WTC11 (cell line): ENCODE measurements at regions of chr2 and their contacts with region 1.

Region 1: DNA sequence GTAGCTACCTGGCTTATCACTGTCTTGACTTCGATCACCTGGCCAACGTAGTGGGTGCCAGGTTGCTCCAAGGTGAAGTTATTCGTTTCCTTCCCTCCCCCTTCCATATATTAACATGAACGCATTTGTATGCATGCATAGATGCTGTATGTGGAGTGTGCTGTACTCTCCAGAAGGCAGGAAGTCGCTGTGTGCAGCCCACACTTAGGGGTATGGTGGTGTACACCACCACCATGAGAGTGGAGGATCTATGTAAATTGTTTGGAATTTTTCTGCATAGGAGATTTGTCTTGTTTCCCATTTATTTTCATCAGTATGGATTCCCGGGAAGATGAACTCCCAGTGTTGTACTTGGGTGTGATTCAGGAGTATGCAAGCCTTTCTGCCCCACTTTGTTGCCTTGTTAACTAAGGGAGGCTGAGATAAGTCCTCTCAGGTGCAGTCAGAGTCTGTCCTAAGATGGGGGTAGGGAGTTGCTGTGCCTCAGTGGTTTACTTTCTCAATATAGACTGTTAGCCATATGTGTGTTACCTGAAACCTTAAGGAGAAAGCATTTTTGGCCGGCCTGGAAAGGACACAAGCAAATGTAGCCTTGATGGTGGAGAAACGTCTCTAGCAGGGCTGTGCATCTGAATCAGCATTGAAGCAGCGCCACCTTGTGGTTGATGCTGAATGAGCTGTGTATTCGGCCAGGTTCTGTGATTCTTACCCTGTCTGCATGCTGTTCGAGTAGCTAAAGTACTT is 149.8 kb downstream of the TANC1 start:
- DNase-seq: peak; percentile 91
- ATAC-seq: peak; percentile 97
- H3K4me3 Mint-ChIP-seq: no peak overlapping the region
- H3K27ac Mint-ChIP-seq: no peak overlapping the region
- H3K4me1 Mint-ChIP-seq: peaks cover 5% of the 10 kb centered on the region; the same call in 1 of the 2 replicates
- H3K27me3 Mint-ChIP-seq: no peaks in the 10 kb centered on the region
- CTCF ChIP-seq: peak; percentile 85

Region 2: DNA sequence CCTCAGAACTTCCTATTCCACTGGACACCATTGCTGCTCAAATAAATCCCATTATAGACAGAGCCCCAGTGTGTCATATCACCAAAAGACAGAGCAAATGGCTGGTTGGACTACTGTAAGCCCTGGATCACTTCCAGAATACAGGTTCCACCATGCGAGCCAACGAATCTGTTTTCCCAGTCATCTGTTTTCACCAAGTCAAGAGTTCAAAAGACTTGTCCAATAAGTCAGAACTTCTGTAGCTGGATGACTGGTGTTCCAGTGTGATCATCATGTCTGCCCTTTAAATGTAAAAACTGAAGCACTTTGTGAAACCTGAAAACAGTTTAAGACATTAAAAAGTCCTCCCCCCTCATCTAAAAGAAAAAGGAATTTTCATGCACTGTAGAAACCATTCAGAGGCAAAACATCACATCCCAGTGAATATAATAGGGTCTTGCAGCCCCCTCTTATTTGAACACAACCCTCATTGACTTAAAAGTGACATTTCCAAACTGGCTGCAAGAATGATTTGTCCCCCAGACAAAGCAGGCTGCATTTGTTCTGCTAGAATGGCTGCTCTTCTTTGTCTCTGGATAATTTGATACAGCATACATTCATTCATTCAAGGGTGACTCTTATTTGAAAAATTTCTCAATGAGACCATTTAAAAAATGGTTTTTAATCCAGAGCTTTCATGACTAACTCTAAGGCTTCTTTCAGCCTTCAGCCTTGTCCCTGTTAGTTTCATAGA is 214.4 kb before region 1 on chr2:
- CTCF ChIA-PET with region 1: interaction called, 16 read pairs
- POLR2A ChIA-PET with region 1: no interaction called
- DNase-seq: no peak
- ATAC-seq: no peak
- H3K4me3 Mint-ChIP-seq: no peak overlapping the region
- H3K27ac Mint-ChIP-seq: no peak overlapping the region
- H3K4me1 Mint-ChIP-seq: peaks cover 20% of the 10 kb centered on the region
- H3K27me3 Mint-ChIP-seq: no peaks in the 10 kb centered on the region
- CTCF ChIP-seq: no peak

Region 3: DNA sequence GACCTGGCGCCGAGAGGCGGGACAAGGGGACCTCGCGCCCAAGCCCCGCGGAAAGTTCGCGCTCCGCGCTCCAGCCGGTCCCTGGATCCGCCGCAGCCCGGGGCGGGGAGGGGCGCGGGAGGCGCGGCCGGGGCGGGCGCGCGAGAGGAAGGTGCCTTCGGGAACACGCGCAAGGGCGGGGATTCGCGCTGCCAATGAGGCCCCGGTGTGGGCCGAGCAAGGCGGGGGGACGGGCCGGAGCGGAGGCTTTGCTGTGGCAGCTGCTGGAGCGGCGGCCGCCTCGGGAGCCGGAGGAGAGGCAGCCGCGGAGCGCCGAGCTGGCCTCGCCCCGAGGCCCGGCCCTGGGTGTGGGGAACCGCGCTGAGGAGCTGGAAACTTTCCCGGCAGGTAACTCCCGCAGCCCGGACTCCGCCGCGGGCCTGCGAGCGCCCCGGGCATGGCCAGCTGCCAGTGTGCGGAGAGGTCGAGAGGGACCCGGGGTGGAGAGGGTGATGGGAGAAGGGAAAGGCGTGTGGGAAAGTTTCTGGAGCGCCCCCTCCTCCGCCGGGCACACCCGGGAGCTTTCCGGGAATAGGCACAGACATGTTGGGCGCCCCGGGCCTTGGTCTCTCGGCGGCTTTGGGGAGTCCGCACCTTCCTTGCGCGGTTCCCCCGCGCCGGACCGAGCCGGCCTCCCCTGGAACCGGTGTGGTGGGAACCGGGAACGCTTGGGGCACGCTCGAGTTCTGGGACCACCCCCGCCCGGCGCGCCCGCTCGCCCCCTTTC is 149.7 kb before region 1 on chr2 and contains the start of gene TANC1:
- CTCF ChIA-PET with region 1: interaction called, 16 read pairs
- POLR2A ChIA-PET with region 1: no interaction called
- DNase-seq: peak; percentile 91
- ATAC-seq: peak; percentile 82
- H3K4me3 Mint-ChIP-seq: peak within 1 kb of the TSS; percentile 91
- H3K27ac Mint-ChIP-seq: 0 out of 2 replicates have a peak within 1 kb of the TSS, but pooled peaks have one; percentile 53
- H3K4me1 Mint-ChIP-seq: peaks cover 27% of the 10 kb centered on the region
- H3K27me3 Mint-ChIP-seq: peaks cover 59% of the 10 kb centered on the region
- CTCF ChIP-seq: no peak
- total RNA-seq, gene TANC1: 8.5 to 11.6 TPM (median 8.7 TPM) in 3 replicates

Region 4: DNA sequence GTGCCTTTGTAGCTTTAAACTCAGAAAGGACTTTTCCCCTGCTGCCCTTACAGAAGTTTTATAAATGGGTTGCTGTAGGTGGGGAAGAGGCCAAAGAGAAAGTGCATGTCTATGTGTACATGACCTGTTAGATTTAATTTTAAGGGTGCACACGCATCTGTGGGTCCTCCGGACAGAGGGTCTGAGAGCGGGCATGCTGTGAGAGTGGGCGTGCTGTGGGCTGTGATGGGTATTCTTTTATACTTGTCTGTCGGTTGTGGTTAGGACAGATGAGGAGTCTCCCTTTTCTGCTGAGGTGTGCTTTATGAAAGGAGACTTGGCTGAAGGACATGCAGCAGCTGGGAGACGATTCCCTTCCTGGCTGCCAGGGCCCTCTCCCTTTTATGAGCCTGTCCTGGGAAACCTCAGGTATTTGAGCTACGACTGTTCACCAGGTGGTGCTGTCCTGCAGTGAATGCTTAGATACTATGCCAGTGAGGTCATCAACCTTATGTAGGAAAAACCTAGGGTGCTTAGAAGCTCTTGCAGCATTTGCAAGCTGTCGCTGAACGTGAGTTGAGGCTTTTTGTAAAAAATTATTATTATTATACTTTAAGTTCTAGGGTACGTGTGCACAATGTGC is 82.4 kb before region 1 on chr2:
- CTCF ChIA-PET with region 1: interaction called, 59 read pairs
- POLR2A ChIA-PET with region 1: no interaction called
- DNase-seq: peak; percentile 54
- ATAC-seq: peak; percentile 97
- H3K4me3 Mint-ChIP-seq: no peak overlapping the region
- H3K27ac Mint-ChIP-seq: no peak overlapping the region
- H3K4me1 Mint-ChIP-seq: peaks cover 32% of the 10 kb centered on the region
- H3K27me3 Mint-ChIP-seq: no peaks in the 10 kb centered on the region
- CTCF ChIP-seq: no peak

Region 5: DNA sequence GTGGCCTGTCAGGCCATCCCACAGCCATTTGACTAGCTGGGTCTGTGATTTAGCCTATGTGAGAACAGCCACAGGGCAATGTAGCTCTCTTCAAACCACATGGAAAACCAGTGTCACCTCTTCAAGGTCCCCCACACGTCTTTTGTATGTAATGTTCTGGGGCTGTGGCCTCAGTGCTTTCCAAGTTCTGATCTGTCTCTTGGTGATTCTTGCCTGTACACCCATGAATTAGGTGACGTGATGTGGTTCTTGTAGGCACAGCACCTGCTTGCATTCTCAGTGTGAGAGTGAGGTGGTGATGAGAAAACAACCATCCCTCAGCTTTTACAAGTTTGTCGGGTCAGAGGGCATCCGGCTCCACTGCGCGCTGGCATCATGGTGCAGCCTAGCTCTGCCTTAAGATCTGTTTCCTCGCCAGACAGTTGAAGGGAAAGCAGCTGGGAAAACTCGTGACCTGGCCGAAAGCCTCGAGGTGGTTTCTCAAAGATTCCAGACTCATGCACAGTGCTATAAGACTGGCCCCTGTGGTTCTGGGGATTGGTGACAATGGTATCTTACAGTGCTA is 24.0 kb before region 1 on chr2:
- CTCF ChIA-PET with region 1: interaction called, 17 read pairs
- POLR2A ChIA-PET with region 1: no interaction called
- DNase-seq: no peak
- ATAC-seq: no peak
- H3K4me3 Mint-ChIP-seq: no peak overlapping the region
- H3K27ac Mint-ChIP-seq: no peak overlapping the region
- H3K4me1 Mint-ChIP-seq: peaks cover 4% of the 10 kb centered on the region
- H3K27me3 Mint-ChIP-seq: no peaks in the 10 kb centered on the region
- CTCF ChIP-seq: no peak

Region 6: DNA sequence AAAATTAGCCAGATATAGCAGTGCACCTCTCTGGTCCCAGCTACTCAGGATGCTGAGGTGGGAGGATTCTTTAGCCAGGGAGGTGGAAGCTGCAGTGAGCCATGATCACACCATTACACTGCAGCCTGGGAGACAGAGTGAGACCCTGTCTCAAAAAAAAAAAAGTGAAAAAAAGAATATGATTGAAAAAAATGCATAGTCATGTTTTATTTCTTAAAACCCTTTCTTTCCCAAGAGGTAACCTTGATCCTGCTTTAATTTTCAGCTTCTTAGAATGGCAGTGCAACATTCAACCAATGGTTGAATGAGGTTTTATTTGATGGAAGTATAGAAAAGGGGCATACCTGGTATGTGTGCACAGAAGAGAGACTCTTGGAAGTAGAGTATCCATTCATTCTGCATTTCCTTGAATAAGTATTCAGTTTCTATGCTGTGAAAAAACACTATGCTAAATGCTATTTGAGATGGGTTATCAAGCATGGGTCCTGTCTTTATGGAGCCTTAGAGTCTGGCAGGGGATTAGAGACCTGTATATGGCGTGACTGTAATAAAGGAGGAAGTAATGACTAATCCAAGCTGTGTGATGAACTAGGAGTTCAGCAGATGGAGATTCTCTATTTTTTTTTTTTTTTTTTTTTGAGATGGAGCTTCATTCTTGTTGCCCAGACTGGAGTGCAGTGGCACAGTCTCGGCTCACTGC is 21.9 kb after region 1 on chr2:
- CTCF ChIA-PET with region 1: interaction called, 20 read pairs
- POLR2A ChIA-PET with region 1: interaction called, 3 read pairs
- DNase-seq: no peak
- ATAC-seq: no peak
- H3K4me3 Mint-ChIP-seq: no peak overlapping the region
- H3K27ac Mint-ChIP-seq: no peak overlapping the region
- H3K4me1 Mint-ChIP-seq: peaks cover 12% of the 10 kb centered on the region
- H3K27me3 Mint-ChIP-seq: no peaks in the 10 kb centered on the region
- CTCF ChIP-seq: no peak